ENCODE measurements at regions of chrX and their contacts with region 1.

Region 1: GRCh38 chrX:120790118-120790517 is 85.5 kb downstream of the CT47B1 start:
- DNase-seq: peak; percentile 10
- H3K4me3 Mint-ChIP-seq: peak overlapping the region; percentile 42
- H3K27ac Mint-ChIP-seq: peak overlapping the region; percentile 91
- H3K4me1 Mint-ChIP-seq: peaks cover 29% of the 10 kb centered on the region
- H3K27me3 Mint-ChIP-seq: no peaks in the 10 kb centered on the region

Region 2: GRCh38 chrX:120499301-120500072 is 290.6 kb before region 1 on chrX:
- intact Hi-C with region 1: loop called (anchors 10 kb)
- DNase-seq: no peak
- H3K4me3 Mint-ChIP-seq: no peak overlapping the region
- H3K27ac Mint-ChIP-seq: no peak overlapping the region
- H3K4me1 Mint-ChIP-seq: peaks cover 5% of the 10 kb centered on the region
- H3K27me3 Mint-ChIP-seq: peaks cover 3% of the 10 kb centered on the region

Region 3: DNA sequence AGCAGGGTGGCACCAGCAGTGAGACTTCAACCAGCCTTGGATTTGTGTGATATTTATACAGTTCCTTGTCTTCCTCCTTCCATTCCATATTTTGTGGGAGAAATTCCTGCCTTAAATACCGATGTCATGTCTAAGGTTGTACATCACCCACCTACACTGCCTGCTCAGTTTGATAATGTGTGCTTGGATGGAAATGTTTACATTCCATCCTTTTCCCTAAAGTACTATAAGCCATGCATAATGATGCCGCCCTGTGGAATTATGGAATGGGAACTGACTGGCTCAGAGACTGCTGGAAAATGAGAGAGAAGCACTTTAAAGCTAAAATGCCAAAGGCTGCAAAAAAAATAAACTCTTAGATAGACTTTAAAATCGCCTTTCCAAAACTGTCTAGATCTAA is 246.0 kb after region 1 on chrX:
- intact Hi-C with region 1: no loop called
- DNase-seq: no peak
- H3K4me3 Mint-ChIP-seq: no peak overlapping the region
- H3K27ac Mint-ChIP-seq: no peak overlapping the region
- H3K4me1 Mint-ChIP-seq: peaks cover 7% of the 10 kb centered on the region
- H3K27me3 Mint-ChIP-seq: no peaks in the 10 kb centered on the region

Region 4: GRCh38 chrX:121256647-121257046 is 466.5 kb after region 1 on chrX:
- intact Hi-C with region 1: loop called (anchors 5 kb)
- DNase-seq: no peak
- H3K4me3 Mint-ChIP-seq: no peak overlapping the region
- H3K27ac Mint-ChIP-seq: peak overlapping the region; percentile 76
- H3K4me1 Mint-ChIP-seq: peaks cover 11% of the 10 kb centered on the region
- H3K27me3 Mint-ChIP-seq: no peaks in the 10 kb centered on the region

Region 5: DNA sequence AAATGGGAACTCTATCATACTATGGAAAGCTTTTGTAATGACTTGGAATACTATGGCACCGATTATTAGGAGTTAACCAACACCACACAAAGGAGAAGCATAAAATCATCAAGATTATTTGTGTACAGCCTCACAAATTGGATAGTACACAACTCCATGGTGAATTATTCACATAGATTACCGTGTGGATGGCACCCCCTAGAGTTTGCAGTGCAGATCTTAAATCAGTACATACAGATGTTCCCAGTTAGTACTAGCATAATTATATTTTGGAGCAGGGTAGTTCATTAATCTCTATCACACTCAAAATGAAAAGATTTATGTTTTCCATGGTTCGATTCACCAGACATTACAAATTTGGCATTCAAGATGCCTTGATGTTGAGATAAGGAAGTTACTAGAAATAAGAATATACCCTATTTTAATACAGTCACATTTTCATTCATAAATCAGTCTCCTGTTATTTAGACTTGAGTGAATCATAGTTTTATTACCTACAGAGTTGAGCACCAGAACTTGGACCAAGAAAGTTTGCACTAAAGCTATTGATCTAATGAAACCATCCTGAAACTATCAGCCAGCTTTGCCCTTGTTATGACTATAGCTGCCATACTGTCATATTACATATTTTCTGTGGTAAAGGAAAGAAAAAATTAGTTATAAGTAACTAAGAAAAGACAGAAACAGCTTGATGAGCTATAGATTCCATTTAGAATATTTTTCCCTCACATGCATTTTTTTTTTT is 789.1 kb after region 1 on chrX:
- intact Hi-C with region 1: loop called (anchors 1 kb)
- DNase-seq: no peak
- H3K4me3 Mint-ChIP-seq: no peak overlapping the region
- H3K27ac Mint-ChIP-seq: no peak overlapping the region
- H3K4me1 Mint-ChIP-seq: peaks cover 2% of the 10 kb centered on the region
- H3K27me3 Mint-ChIP-seq: no peaks in the 10 kb centered on the region

Region 6: GRCh38 chrX:121641560-121641959 is 851.4 kb after region 1 on chrX:
- intact Hi-C with region 1: loop called (anchors 10 kb)
- DNase-seq: no peak
- H3K4me3 Mint-ChIP-seq: no peak overlapping the region
- H3K27ac Mint-ChIP-seq: no peak overlapping the region
- H3K4me1 Mint-ChIP-seq: peaks cover 3% of the 10 kb centered on the region
- H3K27me3 Mint-ChIP-seq: no peaks in the 10 kb centered on the region

Measured in activated T-helper 2 cell treated with anti-CD3 and anti-CD28 coated beads, Interferon-gamma antibody, Interleukin-2, Interleukin-4, amounts not matched to agents 10 μg/mL and 5 μg/mL and 100 μg/mL, durations not matched to agents 14 hours and 24 hours and 36 hours (primary cell).